ENCODE measurements at regions of chr19 and their contacts with region 1.

Region 1: DNA sequence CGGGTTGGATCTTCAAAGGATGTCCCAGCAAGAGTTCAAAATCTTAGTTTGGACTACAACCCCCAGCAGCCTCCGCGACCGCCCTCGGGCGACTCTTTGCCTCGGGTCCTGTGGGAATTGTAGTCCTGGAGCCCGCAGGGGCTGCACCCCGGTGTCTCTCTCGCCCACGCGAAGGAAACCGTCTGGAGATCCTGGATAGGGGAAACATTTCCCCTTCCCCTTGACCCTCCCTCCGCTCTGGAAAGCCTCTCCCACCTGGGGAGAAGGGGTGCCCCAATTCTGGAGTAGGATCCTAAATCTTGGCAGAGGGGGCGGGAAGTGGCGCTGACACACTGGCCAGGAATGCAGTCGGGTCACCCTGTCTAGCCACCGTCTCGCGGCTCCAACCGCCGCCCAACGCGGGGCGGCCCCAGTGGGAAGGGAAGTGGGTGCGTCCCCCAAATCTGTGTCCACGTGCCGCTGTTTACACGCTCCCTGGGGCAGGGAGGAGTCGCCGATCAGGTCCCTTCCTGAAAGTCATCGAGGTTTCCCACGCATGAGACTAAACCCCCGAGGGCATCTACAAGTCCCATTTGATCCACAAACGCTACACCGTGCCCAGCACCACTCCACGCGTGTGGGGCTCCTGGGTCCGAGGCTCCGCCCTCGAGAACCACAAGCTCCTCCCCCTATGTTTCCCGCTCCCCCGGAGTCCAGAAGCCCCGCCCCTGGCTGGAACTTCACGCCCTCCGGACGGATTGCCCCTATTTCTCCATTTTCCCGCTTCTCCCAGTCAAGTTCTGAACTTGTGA is 761 bp upstream of the PPP1R13L start:
- DNase-seq: peak; percentile 91
- ATAC-seq: peak; percentile 59
- H3K4me3 Mint-ChIP-seq: peak overlapping the region; percentile 95
- H3K27ac Mint-ChIP-seq: peak overlapping the region; percentile 97
- H3K4me1 Mint-ChIP-seq: peaks cover 34% of the 10 kb centered on the region
- H3K27me3 Mint-ChIP-seq: peaks cover 23% of the 10 kb centered on the region

Region 2: DNA sequence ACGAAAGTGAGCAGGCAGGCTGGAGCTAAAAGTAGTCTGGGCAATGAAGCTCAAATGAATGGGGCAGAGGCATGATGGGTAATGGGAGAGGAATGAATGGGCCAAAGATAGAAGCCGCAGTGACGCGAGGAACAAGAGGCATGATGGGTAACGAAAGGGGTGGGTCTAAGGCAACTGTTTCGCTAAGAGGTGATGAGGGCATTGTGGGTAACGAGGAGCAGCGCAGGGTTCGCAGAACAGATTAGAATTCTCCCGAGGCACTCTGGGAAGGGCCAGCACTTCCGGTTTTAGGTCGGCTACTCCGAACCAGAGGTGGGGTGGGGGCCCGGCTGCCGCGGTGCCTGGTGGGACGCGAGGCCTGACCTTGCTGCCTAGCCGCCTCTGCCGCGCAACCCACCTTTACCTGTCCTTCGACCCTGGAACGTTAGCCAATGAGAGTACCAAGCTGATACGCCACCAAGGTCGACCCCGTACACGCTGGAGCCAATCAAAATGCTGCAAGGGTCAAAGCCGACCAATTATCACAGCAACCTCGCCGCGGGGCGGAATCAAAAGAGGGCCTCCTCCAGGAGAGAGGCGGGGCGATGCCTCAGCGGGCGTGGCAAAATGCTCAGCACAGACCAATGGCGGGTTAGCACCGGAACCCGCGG is 515.1 kb before region 1 on chr19:
- CTCF ChIA-PET with region 1: no interaction called
- POLR2A ChIA-PET with region 1: no interaction called
- intact Hi-C with region 1: loop called in 1 of 2 experiments (anchors 1 kb)
- DNase-seq: no peak
- ATAC-seq: peak; percentile 84
- H3K4me3 Mint-ChIP-seq: peak overlapping the region; percentile 74
- H3K27ac Mint-ChIP-seq: peak overlapping the region; percentile 96
- H3K4me1 Mint-ChIP-seq: peaks cover 29% of the 10 kb centered on the region
- H3K27me3 Mint-ChIP-seq: no peaks in the 10 kb centered on the region

Region 3: GRCh38 chr19:45178262-45179071 is 227.2 kb before region 1 on chr19 and contains the start of gene BLOC1S3:
- CTCF ChIA-PET with region 1: interaction called, 3 read pairs
- POLR2A ChIA-PET with region 1: no interaction called
- intact Hi-C with region 1: loop called in 1 of 2 experiments (anchors 1 kb)
- DNase-seq: peak; percentile 100
- ATAC-seq: peak; percentile 90
- H3K4me3 Mint-ChIP-seq: peak within 1 kb of the TSS; percentile 91
- H3K27ac Mint-ChIP-seq: peak within 1 kb of the TSS; percentile 94
- H3K4me1 Mint-ChIP-seq: peaks cover 29% of the 10 kb centered on the region
- H3K27me3 Mint-ChIP-seq: no peaks in the 10 kb centered on the region
- total RNA-seq, gene BLOC1S3: 10.7 to 11.2 TPM

Region 4: DNA sequence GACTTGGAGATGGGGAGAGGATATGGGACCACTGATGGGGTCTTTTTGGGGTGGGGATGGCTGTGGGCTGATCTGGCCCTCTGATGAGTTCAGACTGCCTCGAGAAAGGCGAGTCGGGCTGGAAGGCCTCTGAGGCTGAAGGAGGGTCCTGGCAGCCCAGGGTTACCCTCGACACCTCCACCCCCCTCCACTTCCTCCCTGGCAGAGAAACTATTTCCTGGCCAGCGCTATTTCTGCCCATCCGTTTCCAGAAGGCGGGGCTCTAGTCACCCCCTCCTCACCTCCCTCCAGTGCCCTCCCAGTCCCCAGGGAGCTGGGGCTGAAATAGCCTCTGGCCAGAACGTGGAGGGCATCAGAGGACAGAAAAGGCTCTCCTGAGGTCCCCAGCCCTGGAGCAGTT is 170.1 kb before region 1 on chr19:
- CTCF ChIA-PET with region 1: no interaction called
- POLR2A ChIA-PET with region 1: no interaction called
- intact Hi-C with region 1: no loop called
- DNase-seq: no peak
- ATAC-seq: no peak
- H3K4me3 Mint-ChIP-seq: no peak overlapping the region
- H3K27ac Mint-ChIP-seq: no peak overlapping the region
- H3K4me1 Mint-ChIP-seq: no peaks in the 10 kb centered on the region
- H3K27me3 Mint-ChIP-seq: peaks cover 40% of the 10 kb centered on the region

Region 5: DNA sequence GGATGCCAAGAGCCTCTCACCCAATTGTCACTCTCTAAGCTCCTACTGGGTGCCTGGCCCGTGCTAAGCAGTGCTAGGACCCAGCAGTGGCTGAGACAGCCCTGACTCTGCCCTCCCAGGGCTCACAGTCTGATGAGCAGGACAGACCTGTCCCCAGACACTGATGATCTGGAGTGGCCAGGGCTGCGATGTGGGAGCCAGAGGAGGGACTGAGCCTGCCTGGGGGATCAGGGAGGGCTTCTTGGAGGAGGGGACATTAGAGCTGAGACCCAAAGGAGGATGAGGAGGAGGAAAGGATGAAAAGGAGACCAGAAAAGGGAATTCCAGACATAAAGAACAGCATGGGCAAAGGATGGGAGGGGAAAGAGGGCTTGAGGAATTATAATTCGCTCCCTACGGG is 11.5 kb after region 1 on chr19:
- CTCF ChIA-PET with region 1: interaction called, 10 read pairs
- POLR2A ChIA-PET with region 1: no interaction called
- intact Hi-C with region 1: no loop called
- DNase-seq: no peak
- ATAC-seq: no peak
- H3K4me3 Mint-ChIP-seq: no peak overlapping the region
- H3K27ac Mint-ChIP-seq: no peak overlapping the region
- H3K4me1 Mint-ChIP-seq: peaks cover 19% of the 10 kb centered on the region
- H3K27me3 Mint-ChIP-seq: no peaks in the 10 kb centered on the region

Region 6: DNA sequence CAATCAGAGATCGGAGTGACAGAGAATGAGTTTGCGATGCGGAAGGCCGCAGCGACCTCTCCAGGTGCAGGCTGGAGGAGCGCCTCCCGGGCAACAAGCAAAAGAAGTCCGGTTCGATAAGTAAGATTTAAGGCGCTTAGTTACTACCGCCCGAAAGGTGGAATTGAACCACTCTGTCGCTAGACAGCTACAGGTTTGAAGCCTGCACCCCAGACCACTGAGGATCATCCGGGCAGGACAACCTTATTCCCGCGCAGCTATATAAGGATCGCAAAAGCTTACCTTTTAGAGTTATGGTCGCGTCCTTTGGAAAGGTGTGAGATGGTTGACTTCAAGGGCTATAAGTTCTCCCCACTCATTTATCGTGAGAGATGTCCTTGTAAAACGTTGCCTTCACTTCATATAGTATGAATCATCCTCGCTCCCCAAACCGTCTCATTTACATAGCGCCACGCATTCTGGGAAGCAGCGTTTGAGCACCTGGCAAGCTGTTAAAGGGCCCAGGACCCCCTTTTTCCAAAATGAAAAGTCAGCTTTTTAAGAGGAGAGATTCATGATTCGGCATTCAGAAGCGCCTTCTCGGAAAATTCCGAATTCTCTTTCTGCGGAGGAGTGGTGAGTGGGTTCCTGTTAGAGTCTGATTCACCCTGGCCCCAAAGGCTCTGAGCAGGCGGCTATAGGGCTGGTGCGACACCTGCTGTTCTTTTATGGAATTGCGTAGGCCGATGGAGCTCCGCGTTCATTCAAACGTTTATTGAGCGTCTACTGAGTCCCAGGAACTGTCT is 73.0 kb after region 1 on chr19:
- CTCF ChIA-PET with region 1: interaction called, 11 read pairs
- POLR2A ChIA-PET with region 1: interaction called, 4 read pairs
- intact Hi-C with region 1: loop called (anchors 1 kb)
- DNase-seq: peak; percentile 95
- ATAC-seq: peak; percentile 86
- H3K4me3 Mint-ChIP-seq: peak overlapping the region; percentile 60
- H3K27ac Mint-ChIP-seq: peak overlapping the region; percentile 73
- H3K4me1 Mint-ChIP-seq: peaks cover 24% of the 10 kb centered on the region
- H3K27me3 Mint-ChIP-seq: peaks cover 4% of the 10 kb centered on the region

Region 7: DNA sequence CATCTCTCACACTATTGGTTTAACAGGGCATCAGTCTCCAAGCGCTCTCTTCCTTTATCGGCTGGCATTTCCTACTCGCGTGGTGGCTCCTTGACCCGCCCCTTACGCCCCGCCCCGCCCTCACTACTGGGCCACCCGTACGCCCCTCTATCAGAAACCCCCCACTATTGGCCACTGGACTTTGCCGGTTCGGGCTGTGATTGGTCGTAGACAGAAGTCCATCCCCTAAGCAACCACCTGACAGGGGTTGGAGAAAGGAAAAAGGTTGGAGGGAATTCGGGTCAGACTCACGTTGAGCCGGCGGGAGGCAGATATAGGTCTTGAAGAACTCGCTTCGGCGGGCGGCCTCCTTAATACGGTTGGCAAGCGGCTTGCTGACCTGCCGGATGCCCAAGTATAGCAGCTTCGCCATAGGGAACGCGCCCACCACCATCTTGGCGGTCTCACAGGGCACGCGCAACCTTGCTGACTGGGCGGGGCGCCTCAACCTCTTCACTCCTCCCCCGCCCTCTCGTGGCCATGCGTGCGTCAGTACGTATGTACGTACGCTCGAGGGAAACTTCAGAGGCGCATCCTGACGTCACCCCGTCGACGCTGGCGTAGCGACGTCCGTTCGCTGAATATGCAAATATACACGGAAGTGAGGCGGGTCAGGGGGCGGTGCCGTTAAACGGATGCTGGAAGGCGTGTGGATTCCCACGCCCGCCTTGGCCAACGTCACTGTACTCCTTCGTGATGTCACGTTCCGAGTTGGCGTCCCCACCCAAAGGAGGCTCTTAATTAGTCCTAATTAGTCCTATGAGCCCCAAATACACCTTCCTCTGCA is 178.9 kb after region 1 on chr19 and contains the start of gene OPA3:
- CTCF ChIA-PET with region 1: no interaction called
- POLR2A ChIA-PET with region 1: no interaction called
- intact Hi-C with region 1: loop called in 1 of 2 experiments (anchors 1 kb)
- DNase-seq: peak; percentile 100
- ATAC-seq: peak; percentile 95
- H3K4me3 Mint-ChIP-seq: peak within 1 kb of the TSS; percentile 87
- H3K27ac Mint-ChIP-seq: peak within 1 kb of the TSS; percentile 93
- H3K4me1 Mint-ChIP-seq: peaks cover 22% of the 10 kb centered on the region
- H3K27me3 Mint-ChIP-seq: peaks cover 2% of the 10 kb centered on the region
- total RNA-seq, gene OPA3: 13.8 to 14.4 TPM

Region 8: DNA sequence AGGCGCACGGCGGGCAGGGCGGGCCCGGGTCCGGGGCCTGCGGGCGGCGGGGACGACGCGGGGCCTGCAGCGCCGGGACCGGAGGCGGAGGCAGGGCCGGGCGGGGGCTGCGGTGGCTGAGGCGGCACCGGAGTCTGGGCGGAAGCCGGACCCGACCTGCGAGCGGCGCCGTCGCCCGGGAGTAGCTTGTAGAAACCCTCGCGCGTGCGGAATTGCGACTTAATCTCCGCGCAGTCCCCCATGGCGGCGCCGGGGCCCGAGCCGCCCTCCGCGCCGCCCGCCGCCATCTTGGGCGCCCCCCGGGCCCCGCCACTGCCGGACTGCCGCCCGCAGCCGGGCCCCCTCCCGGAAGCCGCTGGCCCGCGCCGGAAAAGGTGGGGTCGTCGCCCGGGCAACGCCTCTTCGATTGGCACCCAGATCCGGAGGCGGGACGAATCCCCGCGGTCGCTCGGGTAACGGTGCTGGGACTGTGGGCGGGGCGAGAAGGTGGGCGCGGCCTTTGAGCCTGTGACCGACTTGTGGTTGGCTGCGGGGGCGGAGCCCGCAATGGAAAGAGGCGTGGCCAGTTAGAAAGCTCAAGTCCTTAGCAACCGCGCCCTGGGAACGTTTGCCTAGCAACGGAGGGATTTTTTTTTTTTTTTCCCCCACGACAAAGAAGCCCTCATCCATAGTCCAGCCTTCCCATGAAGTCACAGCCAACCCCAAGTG is 387.0 kb after region 1 on chr19 and contains the start of gene DMWD:
- CTCF ChIA-PET with region 1: no interaction called
- POLR2A ChIA-PET with region 1: no interaction called
- intact Hi-C with region 1: loop called in 1 of 2 experiments (anchors 1 kb)
- DNase-seq: peak; percentile 100
- ATAC-seq: peak; percentile 93
- H3K4me3 Mint-ChIP-seq: peak within 1 kb of the TSS; percentile 95
- H3K27ac Mint-ChIP-seq: peak within 1 kb of the TSS; percentile 75
- H3K4me1 Mint-ChIP-seq: peaks cover 30% of the 10 kb centered on the region
- H3K27me3 Mint-ChIP-seq: peaks cover 16% of the 10 kb centered on the region
- total RNA-seq, gene DMWD: 31.1 to 35.1 TPM

Measured in activated CD4-positive, alpha-beta T cell treated with anti-CD3 and anti-CD28 coated beads for 36 hours (primary cell).